A549 (cell line): ENCODE measurements at regions of chr6 and their contacts with region 1.

Region 1: GRCh38 chr6:41895300-41896233 is at the start of gene USP49:
- DNase-seq: peak; percentile 67 to 78
- ATAC-seq: peak; percentile 95 to 96
- H3K4me3 ChIP-seq: peak within 1 kb of the TSS; percentile 78
- H3K27ac ChIP-seq: peak within 1 kb of the TSS; percentile 70 to 91
- H3K4me1 ChIP-seq: peaks cover 24% of the 10 kb centered on the region
- CTCF ChIP-seq: no peak
- EP300 ChIP-seq: no peak
- POLR2A ChIP-seq: no peak
- RAD21 ChIP-seq: no peak
- polyA plus RNA-seq, gene USP49: 2.9 TPM in 2 replicates

Region 2: GRCh38 chr6:41920921-41921711 is 25.5 kb after region 1 on chr6 and contains the starts of genes BYSL and MED20:
- CTCF ChIA-PET with region 1: interaction called, 6 read pairs
- POLR2A ChIA-PET with region 1: interaction called, 12 read pairs
- DNase-seq: peak; percentile 86 to 97
- ATAC-seq: peak; percentile 88 to 94
- H3K4me3 ChIP-seq: peak within 1 kb of the TSS; percentile 80
- H3K27ac ChIP-seq: peak within 1 kb of the TSS; percentile 99
- H3K4me1 ChIP-seq: peaks cover 49% of the 10 kb centered on the region
- CTCF ChIP-seq: peak; percentile 81
- EP300 ChIP-seq: no peak
- POLR2A ChIP-seq: no peak; the same call in 1 of the 2 replicates
- RAD21 ChIP-seq: no peak
- polyA plus RNA-seq, gene BYSL: 28.8 and 38.7 TPM in 2 replicates
- polyA plus RNA-seq, gene MED20: 29.3 and 32.9 TPM in 2 replicates

Region 3: DNA sequence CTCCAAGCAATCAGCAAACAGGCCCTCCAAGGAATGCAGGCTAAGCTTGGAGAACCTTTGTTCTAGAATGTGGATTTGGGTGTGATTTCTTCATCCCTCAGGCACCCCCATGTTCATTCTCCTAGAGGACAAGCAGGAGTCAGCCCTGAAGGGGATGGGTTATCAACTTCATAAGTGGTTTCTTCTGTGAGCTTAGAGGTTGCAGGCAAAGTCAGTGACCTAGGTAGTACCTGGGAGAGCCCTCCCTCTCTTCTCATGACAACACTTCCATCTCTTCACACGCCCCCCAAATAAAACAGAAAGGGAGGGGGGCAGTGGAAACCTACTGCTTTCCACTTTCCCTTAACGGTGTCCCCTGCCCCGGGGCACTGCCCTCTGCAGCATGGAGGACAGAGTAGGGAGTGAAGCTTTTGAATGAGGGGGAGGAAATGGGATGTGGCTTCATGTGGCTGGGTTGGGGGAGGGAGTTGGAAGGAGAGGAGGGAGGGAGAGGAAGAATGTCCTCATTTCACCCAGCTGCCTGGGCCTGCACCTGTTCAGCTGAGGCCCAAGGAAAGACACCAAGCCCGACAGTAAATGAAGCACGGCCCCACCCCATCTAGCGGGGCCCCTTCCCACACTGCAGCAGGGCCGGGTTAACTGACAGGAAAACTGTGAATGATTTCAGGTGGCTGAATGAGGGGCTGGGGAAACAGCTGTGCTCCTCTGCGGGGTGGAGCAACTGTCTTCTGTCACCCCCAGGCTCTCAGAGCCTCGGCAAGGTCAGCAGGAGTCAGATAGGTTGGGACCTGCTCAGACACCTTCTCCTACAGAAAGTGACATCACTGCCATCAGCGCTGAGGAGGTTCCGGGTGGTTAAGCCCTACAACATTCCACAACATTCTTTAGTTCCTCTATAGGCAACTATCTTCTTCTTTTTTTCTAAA is 114.7 kb after region 1 on chr6:
- CTCF ChIA-PET with region 1: no interaction called
- POLR2A ChIA-PET with region 1: no interaction called
- DNase-seq: no peak
- ATAC-seq: peak in 1 of 2 experiments; percentile 49; a peak in 2 of 6 replicates
- H3K4me3 ChIP-seq: no peak overlapping the region
- H3K27ac ChIP-seq: peak overlapping the region in 1 of 2 experiments; percentile 63; a peak in 3 of 6 replicates
- H3K4me1 ChIP-seq: peaks cover 23% of the 10 kb centered on the region; the same call in 2 of the 3 replicates
- CTCF ChIP-seq: no peak
- EP300 ChIP-seq: no peak
- POLR2A ChIP-seq: no peak
- RAD21 ChIP-seq: no peak